CD8-positive, alpha-beta T cell (primary cell): ENCODE measurements at regions of chr12 and their contacts with region 1.

Region 1: DNA sequence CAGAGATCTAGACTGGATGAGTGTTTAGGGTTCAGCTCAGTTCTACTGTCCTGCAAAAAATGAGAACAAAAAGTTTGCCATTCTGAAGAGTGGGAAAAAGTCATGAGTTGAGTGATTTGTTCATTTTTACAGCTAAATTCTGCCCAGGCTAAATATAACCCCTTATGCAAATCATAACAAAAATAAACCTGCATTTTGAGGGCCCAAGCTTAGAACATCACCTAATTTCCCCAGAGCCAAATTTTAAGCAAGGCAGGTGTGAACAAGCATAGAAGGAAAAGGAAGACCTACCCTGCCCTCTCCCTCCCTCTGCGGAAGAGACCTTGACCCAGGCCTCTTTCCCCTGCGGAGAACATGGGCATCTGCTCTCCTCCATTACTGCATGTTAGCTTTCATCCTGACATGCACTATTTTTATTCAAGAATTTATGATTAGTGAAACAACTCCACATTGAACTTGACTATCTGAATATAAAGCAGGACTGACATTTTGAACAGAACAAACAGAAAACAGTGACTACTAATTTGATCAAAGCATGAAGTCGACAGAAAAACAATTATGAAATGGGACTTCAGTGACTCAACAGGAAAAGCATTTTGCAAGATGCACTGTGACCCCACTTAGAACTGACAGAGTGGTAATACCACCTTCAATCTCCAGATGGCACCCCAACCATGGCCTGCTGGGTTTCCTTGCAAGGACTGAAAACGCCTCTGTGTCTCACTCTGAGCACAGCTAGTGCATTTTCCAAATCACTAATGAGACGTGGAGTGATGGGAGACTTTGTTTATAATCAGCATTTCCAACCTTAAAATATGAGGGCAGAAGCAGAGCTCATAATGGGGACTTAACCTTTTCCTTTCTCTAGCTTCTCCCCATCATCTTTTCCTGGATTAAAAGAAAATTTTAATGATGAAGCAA is 30.9 kb upstream of the SELPLG start:
- DNase-seq: peak; percentile 70 to 89 (median 83)
- ATAC-seq: peak; percentile 100
- H3K4me3 ChIP-seq: no peak overlapping the region
- H3K4me3 Mint-ChIP-seq: no peak overlapping the region
- H3K27ac ChIP-seq: peak overlapping the region in 1 of 2 experiments; percentile 31
- H3K27ac Mint-ChIP-seq: peak overlapping the region; percentile 79
- H3K4me1 ChIP-seq: peaks cover 5% of the 10 kb centered on the region
- H3K4me1 Mint-ChIP-seq: peaks cover 15% of the 10 kb centered on the region
- H3K27me3 ChIP-seq: no peaks in the 10 kb centered on the region
- H3K27me3 Mint-ChIP-seq: no peaks in the 10 kb centered on the region
- CTCF ChIP-seq: peak; percentile 92

Region 2: GRCh38 chr12:108403952-108404351 is 260.6 kb before region 1 on chr12:
- CTCF ChIA-PET with region 1: no interaction called
- POLR2A ChIA-PET with region 1: no interaction called
- intact Hi-C with region 1: no loop called
- DNase-seq: no peak
- ATAC-seq: no peak
- H3K4me3 ChIP-seq: no peak overlapping the region
- H3K4me3 Mint-ChIP-seq: no peak overlapping the region
- H3K27ac ChIP-seq: no peak overlapping the region
- H3K27ac Mint-ChIP-seq: no peak overlapping the region
- H3K4me1 ChIP-seq: no peaks in the 10 kb centered on the region
- H3K4me1 Mint-ChIP-seq: no peaks in the 10 kb centered on the region
- H3K27me3 ChIP-seq: no peaks in the 10 kb centered on the region
- H3K27me3 Mint-ChIP-seq: peaks cover 13% of the 10 kb centered on the region
- CTCF ChIP-seq: no peak

Region 3: GRCh38 chr12:108633534-108634248 is 30.9 kb before region 1 on chr12 and contains the start of gene SELPLG:
- CTCF ChIA-PET with region 1: interaction called, 115 read pairs
- POLR2A ChIA-PET with region 1: interaction called, 6 read pairs
- intact Hi-C with region 1: loop called in 1 of 2 experiments (anchors 2 kb)
- DNase-seq: peak; percentile 77 to 97 (median 88)
- ATAC-seq: peak; percentile 60
- H3K4me3 ChIP-seq: peak within 1 kb of the TSS; percentile 71 to 95
- H3K4me3 Mint-ChIP-seq: peak within 1 kb of the TSS; percentile 100
- H3K27ac ChIP-seq: peak within 1 kb of the TSS; percentile 91 to 92
- H3K27ac Mint-ChIP-seq: peak within 1 kb of the TSS; percentile 100
- H3K4me1 ChIP-seq: peaks cover 73% of the 10 kb centered on the region
- H3K4me1 Mint-ChIP-seq: peaks cover 71% of the 10 kb centered on the region
- H3K27me3 ChIP-seq: no peaks in the 10 kb centered on the region
- H3K27me3 Mint-ChIP-seq: no peaks in the 10 kb centered on the region
- CTCF ChIP-seq: peak; percentile 23
- total RNA-seq, gene SELPLG: 30.4 to 32.3 TPM

Region 4: GRCh38 chr12:108685469-108686260 is 21.1 kb after region 1 on chr12:
- CTCF ChIA-PET with region 1: interaction called, 15 read pairs
- POLR2A ChIA-PET with region 1: no interaction called
- intact Hi-C with region 1: loop called in 1 of 2 experiments (anchors 2 kb)
- DNase-seq: no peak
- ATAC-seq: no peak
- H3K4me3 ChIP-seq: no peak overlapping the region
- H3K4me3 Mint-ChIP-seq: no peak overlapping the region
- H3K27ac ChIP-seq: no peak overlapping the region
- H3K27ac Mint-ChIP-seq: no peak overlapping the region
- H3K4me1 ChIP-seq: peaks cover 18% of the 10 kb centered on the region
- H3K4me1 Mint-ChIP-seq: peaks cover 23% of the 10 kb centered on the region
- H3K27me3 ChIP-seq: no peaks in the 10 kb centered on the region
- H3K27me3 Mint-ChIP-seq: no peaks in the 10 kb centered on the region
- CTCF ChIP-seq: no peak

Region 5: DNA sequence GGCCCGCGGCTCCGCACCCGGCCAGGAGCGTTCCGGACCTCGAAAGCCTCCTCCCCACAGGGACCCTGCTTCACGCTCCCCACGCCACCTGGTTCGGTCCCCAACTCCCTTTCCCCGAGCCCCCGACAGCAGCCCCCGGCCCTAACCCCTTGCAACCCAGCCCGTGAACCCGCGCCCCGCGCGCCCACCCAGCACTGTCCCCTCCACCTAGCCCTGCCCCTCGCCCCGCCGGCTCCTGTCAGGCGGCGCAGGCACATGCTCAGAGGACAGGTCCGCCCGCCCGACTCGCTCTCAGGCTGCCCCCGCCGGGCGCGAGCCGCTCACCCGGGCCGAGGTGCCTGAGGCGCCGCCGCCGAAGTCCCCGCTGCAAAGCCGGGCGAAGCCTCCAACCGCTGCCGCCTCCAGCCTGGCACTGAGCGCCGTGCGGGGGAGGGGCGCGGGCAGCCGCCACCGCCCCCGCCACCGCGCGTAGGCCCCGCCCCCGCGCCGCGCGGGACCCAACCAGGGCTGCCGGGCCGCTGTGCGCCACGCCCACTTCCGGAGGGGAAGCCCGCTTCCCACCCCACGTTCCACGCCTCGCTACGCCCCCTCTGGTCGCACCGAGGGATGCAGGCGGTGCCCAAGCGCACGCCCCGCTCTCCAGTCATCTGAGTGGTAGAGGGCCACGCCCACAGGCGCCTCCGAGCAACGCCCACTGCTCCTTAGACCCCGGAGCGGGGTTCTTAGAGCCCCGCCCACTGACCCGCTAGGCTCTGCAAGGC is 66.7 kb after region 1 on chr12 and contains the start of gene CORO1C:
- CTCF ChIA-PET with region 1: interaction called, 7 read pairs
- POLR2A ChIA-PET with region 1: no interaction called
- intact Hi-C with region 1: loop called in 1 of 2 experiments (anchors 2 kb)
- DNase-seq: peak; percentile 86 to 97 (median 92)
- ATAC-seq: peak; percentile 75
- H3K4me3 ChIP-seq: peak within 1 kb of the TSS; percentile 91 to 93
- H3K4me3 Mint-ChIP-seq: peak within 1 kb of the TSS; percentile 94
- H3K27ac ChIP-seq: peak within 1 kb of the TSS; percentile 67 to 85
- H3K27ac Mint-ChIP-seq: peak within 1 kb of the TSS; percentile 86
- H3K4me1 ChIP-seq: peaks cover 7% of the 10 kb centered on the region
- H3K4me1 Mint-ChIP-seq: peaks cover 26% of the 10 kb centered on the region
- H3K27me3 ChIP-seq: no peaks in the 10 kb centered on the region
- H3K27me3 Mint-ChIP-seq: no peaks in the 10 kb centered on the region
- CTCF ChIP-seq: peak; percentile 74
- total RNA-seq, gene CORO1C: 10.3 to 15.4 TPM

Region 6: GRCh38 chr12:108803428-108804105 is 139.0 kb after region 1 on chr12:
- CTCF ChIA-PET with region 1: interaction called, 418 read pairs
- POLR2A ChIA-PET with region 1: interaction called, 8 read pairs
- intact Hi-C with region 1: loop called (anchors 1 kb)
- DNase-seq: peak; percentile 44 to 84 (median 68)
- ATAC-seq: peak; percentile 95
- H3K4me3 ChIP-seq: no peak overlapping the region
- H3K4me3 Mint-ChIP-seq: no peak overlapping the region
- H3K27ac ChIP-seq: no peak overlapping the region
- H3K27ac Mint-ChIP-seq: peak overlapping the region; percentile 14
- H3K4me1 ChIP-seq: no peaks in the 10 kb centered on the region
- H3K4me1 Mint-ChIP-seq: peaks cover 4% of the 10 kb centered on the region
- H3K27me3 ChIP-seq: no peaks in the 10 kb centered on the region
- H3K27me3 Mint-ChIP-seq: no peaks in the 10 kb centered on the region
- CTCF ChIP-seq: peak; percentile 94

Region 7: GRCh38 chr12:108950991-108951739 is 286.6 kb after region 1 on chr12:
- CTCF ChIA-PET with region 1: interaction called, 18 read pairs
- POLR2A ChIA-PET with region 1: no interaction called
- intact Hi-C with region 1: loop called (anchors 1 kb)
- DNase-seq: peak; percentile 43 to 83 (median 69)
- ATAC-seq: peak; percentile 91
- H3K4me3 ChIP-seq: no peak overlapping the region
- H3K4me3 Mint-ChIP-seq: no peak overlapping the region
- H3K27ac ChIP-seq: no peak overlapping the region
- H3K27ac Mint-ChIP-seq: no peak overlapping the region
- H3K4me1 ChIP-seq: no peaks in the 10 kb centered on the region
- H3K4me1 Mint-ChIP-seq: peaks cover 6% of the 10 kb centered on the region
- H3K27me3 ChIP-seq: no peaks in the 10 kb centered on the region
- H3K27me3 Mint-ChIP-seq: peaks cover 16% of the 10 kb centered on the region
- CTCF ChIP-seq: peak; percentile 86

Region 8: GRCh38 chr12:108967869-108968540 is 303.4 kb after region 1 on chr12:
- CTCF ChIA-PET with region 1: no interaction called
- POLR2A ChIA-PET with region 1: no interaction called
- intact Hi-C with region 1: no loop called
- DNase-seq: no peak
- ATAC-seq: no peak
- H3K4me3 ChIP-seq: no peak overlapping the region
- H3K4me3 Mint-ChIP-seq: no peak overlapping the region
- H3K27ac ChIP-seq: no peak overlapping the region
- H3K27ac Mint-ChIP-seq: no peak overlapping the region
- H3K4me1 ChIP-seq: no peaks in the 10 kb centered on the region
- H3K4me1 Mint-ChIP-seq: no peaks in the 10 kb centered on the region
- H3K27me3 ChIP-seq: peaks cover 0 to 4% of the 10 kb centered on the region in 2 experiments
- H3K27me3 Mint-ChIP-seq: peaks cover 21% of the 10 kb centered on the region
- CTCF ChIP-seq: peak; percentile 29